ENCODE measurements at regions of chr3 and their contacts with region 1.

Region 1: GRCh38 chr3:187745201-187746058 is at the start of gene BCL6:
- DNase-seq: peak; percentile 99
- ATAC-seq: peak; percentile 65
- H3K4me3 ChIP-seq: peak within 1 kb of the TSS; percentile 83
- H3K27ac ChIP-seq: peak within 1 kb of the TSS; percentile 97
- H3K4me1 ChIP-seq: peaks cover 7% of the 10 kb centered on the region
- H3K27me3 ChIP-seq: no peaks in the 10 kb centered on the region
- CTCF ChIP-seq: no peak
- POLR2A ChIP-seq: peak; percentile 96
- RAD21 ChIP-seq: peak; percentile 27; the same call in 1 of the 2 replicates
- total RNA-seq, gene BCL6: 21.4 and 22.6 TPM in 2 replicates

Region 2: DNA sequence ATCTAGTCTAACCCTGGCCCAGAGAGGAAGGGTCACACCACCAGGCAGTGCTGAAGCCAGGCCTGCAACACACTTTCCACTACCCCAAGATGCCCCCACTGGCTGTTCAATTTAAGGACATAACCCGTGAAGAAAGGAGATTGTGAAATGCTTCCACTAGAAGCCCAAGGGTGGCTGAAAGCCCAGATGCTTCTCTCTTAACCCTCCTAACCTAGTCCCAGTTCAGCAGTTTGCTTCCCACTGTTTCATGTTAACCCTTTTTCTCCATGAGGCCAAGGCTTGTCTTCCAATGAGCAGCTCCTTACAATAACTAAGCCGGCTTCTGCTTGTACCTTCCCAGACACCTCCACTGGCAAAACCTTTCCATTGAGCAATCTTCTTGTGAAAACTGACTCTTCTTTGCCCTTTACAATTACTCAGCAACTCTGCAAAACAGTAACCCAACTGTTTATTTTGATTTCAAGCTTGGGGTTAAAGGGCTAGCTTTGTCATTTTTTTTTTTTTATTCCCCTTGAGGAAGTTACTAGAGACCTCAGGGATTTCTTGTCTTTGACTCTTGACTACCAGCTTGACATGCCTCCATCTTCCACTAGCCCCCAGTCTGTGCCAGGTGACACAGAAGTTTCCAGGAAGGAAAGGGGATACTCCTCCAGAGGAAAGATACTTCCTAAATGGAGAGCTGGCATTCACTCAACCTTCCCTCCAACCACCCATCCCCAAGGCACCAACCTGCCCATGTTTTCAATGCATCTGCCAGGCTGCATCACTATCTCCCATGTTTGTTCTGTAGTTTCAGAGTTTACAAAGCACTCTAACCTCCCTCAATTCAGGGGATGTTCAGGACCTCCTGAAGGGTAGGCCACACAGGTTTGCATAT is 209.9 kb after region 1 on chr3:
- CTCF ChIA-PET with region 1: interaction called, 6 read pairs
- POLR2A ChIA-PET with region 1: no interaction called
- dilution Hi-C with region 1: no loop called
- in situ Hi-C with region 1: no loop called
- intact Hi-C with region 1: loop called (anchors 5 kb)
- DNase-seq: peak; percentile 93
- ATAC-seq: peak; percentile 74
- H3K4me3 ChIP-seq: no peak overlapping the region
- H3K27ac ChIP-seq: peak overlapping the region; percentile 60
- H3K4me1 ChIP-seq: peaks cover 14% of the 10 kb centered on the region
- H3K27me3 ChIP-seq: no peaks in the 10 kb centered on the region; the same call in none of the 2 replicates
- CTCF ChIP-seq: no peak
- POLR2A ChIP-seq: 0 out of 2 replicates have a peak, but pooled peaks have one; percentile 33
- RAD21 ChIP-seq: no peak

Region 3: GRCh38 chr3:188179006-188179966 is 433.9 kb after region 1 on chr3:
- CTCF ChIA-PET with region 1: no interaction called
- POLR2A ChIA-PET with region 1: no interaction called
- dilution Hi-C with region 1: no loop called
- in situ Hi-C with region 1: loop called (anchors 10 kb)
- intact Hi-C with region 1: loop called (anchors 2 kb)
- DNase-seq: peak; percentile 92
- ATAC-seq: peak; percentile 90
- H3K4me3 ChIP-seq: no peak overlapping the region
- H3K27ac ChIP-seq: peak overlapping the region; percentile 86
- H3K4me1 ChIP-seq: peaks cover 21% of the 10 kb centered on the region
- H3K27me3 ChIP-seq: no peaks in the 10 kb centered on the region
- CTCF ChIP-seq: peak; percentile 31
- POLR2A ChIP-seq: no peak
- RAD21 ChIP-seq: peak; percentile 31

Region 4: GRCh38 chr3:188262913-188263683 is 517.7 kb after region 1 on chr3:
- CTCF ChIA-PET with region 1: interaction called, 4 read pairs
- POLR2A ChIA-PET with region 1: interaction called, 4 read pairs
- dilution Hi-C with region 1: no loop called
- in situ Hi-C with region 1: loop called (anchors 10 kb)
- intact Hi-C with region 1: loop called (anchors 1 kb)
- DNase-seq: peak; percentile 83
- ATAC-seq: peak; percentile 16
- H3K4me3 ChIP-seq: no peak overlapping the region
- H3K27ac ChIP-seq: peak overlapping the region; percentile 37
- H3K4me1 ChIP-seq: peaks cover 44% of the 10 kb centered on the region
- H3K27me3 ChIP-seq: no peaks in the 10 kb centered on the region
- CTCF ChIP-seq: no peak
- POLR2A ChIP-seq: no peak
- RAD21 ChIP-seq: no peak

Region 5: DNA sequence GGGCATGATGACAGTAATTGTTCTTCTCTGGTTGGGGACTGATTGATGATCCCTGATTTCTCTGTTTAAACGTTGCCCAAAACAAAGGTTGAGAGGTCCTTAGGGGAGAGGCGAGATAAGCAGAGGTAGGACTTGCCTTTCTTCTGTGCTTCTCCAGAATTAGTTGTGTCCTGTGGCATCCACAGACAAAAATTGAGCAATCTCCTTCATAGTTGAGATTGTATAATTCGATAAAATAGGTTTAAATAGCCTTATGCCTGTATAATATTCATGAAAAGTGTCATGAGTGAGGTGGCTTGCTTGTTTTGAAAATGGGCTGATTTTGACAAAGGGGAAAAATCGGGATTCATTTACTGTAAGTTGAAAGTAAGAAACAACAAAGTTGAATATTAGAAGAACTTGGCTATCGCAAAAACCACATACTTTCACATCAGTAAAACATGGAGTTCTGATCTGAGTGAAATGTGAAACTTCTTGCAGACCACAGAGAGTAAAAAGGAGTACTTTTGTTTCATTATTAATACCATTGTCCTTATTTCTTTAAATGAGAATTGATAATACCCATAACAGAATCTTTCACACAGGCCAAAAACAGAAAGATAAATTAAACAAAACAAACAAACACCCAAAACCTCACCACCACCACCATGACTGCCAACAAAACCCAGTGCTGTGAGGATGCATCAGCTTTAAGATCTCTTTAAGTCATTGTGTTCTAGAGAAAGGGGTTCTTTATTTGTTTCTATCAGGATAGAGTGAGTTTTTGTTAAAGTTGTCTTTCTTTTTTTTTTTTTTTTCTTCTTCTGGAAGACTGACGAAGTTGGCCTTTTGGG is 564.2 kb after region 1 on chr3:
- CTCF ChIA-PET with region 1: no interaction called
- POLR2A ChIA-PET with region 1: no interaction called
- dilution Hi-C with region 1: loop called (anchors 25 kb)
- in situ Hi-C with region 1: no loop called
- intact Hi-C with region 1: no loop called
- DNase-seq: no peak
- ATAC-seq: no peak
- H3K4me3 ChIP-seq: no peak overlapping the region
- H3K27ac ChIP-seq: no peak overlapping the region
- H3K4me1 ChIP-seq: peaks cover 4% of the 10 kb centered on the region; the same call in 1 of the 2 replicates
- H3K27me3 ChIP-seq: no peaks in the 10 kb centered on the region
- CTCF ChIP-seq: no peak
- POLR2A ChIP-seq: no peak
- RAD21 ChIP-seq: no peak

Region 6: DNA sequence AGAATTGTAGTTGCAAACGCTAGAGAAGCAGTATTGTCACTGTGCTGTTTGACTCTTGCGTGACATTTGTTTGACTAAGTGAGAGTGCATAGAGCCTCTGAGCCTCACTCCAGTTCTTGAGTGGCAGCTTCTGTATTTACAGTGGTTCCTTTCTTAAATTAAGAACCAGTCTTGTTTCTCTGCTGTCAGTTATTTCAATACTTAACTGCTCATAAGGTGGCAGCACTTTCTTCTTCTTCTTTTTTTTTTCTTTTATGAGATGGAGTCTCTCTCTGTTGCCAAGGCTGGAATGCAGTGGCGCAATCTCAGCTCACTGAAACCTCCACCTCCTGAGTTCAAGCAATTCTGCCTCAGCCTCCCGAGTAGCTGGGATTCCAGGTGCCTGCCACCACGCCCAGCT is 780.6 kb after region 1 on chr3:
- CTCF ChIA-PET with region 1: interaction called, 3 read pairs
- POLR2A ChIA-PET with region 1: no interaction called
- dilution Hi-C with region 1: no loop called
- in situ Hi-C with region 1: loop called (anchors 25 kb)
- intact Hi-C with region 1: no loop called
- DNase-seq: peak; percentile 14
- ATAC-seq: no peak
- H3K4me3 ChIP-seq: no peak overlapping the region
- H3K27ac ChIP-seq: peak overlapping the region; percentile 21; the same call in 1 of the 2 replicates
- H3K4me1 ChIP-seq: peaks cover 15% of the 10 kb centered on the region
- H3K27me3 ChIP-seq: no peaks in the 10 kb centered on the region
- CTCF ChIP-seq: no peak
- POLR2A ChIP-seq: no peak
- RAD21 ChIP-seq: no peak

Region 7: GRCh38 chr3:188772886-188773285 is 1027.5 kb after region 1 on chr3:
- CTCF ChIA-PET with region 1: no interaction called
- POLR2A ChIA-PET with region 1: no interaction called
- dilution Hi-C with region 1: no loop called
- in situ Hi-C with region 1: loop called (anchors 25 kb)
- intact Hi-C with region 1: no loop called
- DNase-seq: peak; percentile 97
- ATAC-seq: peak; percentile 91
- H3K4me3 ChIP-seq: no peak overlapping the region
- H3K27ac ChIP-seq: peak overlapping the region; percentile 28; the same call in 1 of the 2 replicates
- H3K4me1 ChIP-seq: peaks cover 4% of the 10 kb centered on the region
- H3K27me3 ChIP-seq: no peaks in the 10 kb centered on the region
- CTCF ChIP-seq: no peak
- POLR2A ChIP-seq: no peak
- RAD21 ChIP-seq: no peak

Measured in IMR-90 (cell line).